Activated T-helper 2 cell treated with anti-CD3 and anti-CD28 coated beads, Interferon-gamma antibody, Interleukin-2, Interleukin-4, amounts not matched to agents 10 μg/mL and 5 μg/mL and 100 μg/mL, durations not matched to agents 14 hours and 24 hours and 36 hours (primary cell): ENCODE measurements at regions of chr12 and their contacts with region 1.

Region 1: DNA sequence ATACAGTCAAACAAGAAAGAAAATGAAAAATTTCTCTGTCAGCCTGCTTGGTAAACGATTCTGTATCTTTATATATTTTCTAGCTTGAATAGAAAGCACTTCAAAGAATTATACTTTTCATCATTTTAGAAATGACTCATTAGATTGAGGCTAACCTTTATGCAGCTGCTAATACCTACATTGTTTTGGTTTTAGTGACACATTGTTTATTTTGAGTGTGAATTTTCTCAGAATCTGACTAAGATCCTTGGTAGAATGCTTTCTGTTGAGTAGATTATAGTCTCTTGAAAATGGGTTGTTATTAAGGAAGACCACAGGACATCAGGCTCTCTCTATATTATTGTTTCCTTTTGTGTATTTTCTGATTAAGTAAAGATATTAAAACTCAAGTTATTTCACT is at the start of gene PMCH:
- DNase-seq: no peak
- H3K4me3 Mint-ChIP-seq: peak within 1 kb of the TSS; percentile 63
- H3K27ac Mint-ChIP-seq: peak within 1 kb of the TSS; percentile 73
- H3K4me1 Mint-ChIP-seq: peaks cover 38% of the 10 kb centered on the region
- H3K27me3 Mint-ChIP-seq: no peaks in the 10 kb centered on the region
- total RNA-seq, gene PMCH: 210 and 221 TPM in 2 replicates

Region 2: DNA sequence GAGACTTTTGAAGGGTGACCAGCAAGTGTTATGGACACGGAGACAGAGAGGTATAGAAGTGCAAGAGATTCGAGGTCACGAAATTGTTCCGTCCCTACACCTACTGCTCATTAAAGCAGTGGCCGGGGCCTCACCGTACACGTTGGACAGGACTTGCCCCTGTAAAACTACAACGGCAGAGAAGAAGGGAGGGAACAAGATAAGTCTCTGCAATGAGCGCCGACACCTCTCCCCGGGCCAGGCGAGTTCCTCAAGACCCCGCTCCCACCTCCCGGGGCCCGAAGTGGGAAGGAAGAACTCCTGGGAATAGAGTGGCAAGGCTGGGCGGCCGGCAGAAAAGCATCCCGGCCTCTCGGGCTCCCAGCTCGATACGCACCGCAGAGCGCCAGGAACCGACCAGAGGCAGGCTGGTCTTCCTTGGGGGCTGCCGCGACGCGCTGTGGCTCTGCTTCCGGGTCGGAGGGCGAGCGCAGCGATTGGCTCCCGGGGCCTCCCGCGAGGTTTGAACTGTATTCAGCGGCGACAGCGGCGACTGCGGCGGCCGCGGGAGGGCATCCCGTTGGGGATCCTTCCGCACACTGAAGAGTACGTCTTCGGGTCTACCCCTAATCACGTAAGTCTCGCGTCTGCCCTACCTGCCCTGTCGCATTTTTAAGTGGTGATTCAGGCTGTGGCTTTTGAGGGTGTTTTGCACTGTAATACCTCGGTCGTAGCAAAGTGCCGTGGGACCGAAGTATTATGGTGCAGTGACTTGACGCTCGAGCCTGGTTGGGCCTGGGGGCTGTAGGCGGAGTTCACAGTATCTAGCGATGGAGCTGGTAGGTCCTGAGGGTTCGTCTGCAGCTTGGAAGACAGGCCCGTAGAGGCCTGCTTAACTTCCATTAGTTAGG is 77.9 kb before region 1 on chr12 and contains the starts of genes NUP37 and PARPBP:
- intact Hi-C with region 1: loop called (anchors 1 kb)
- DNase-seq: peak; percentile 91
- H3K4me3 Mint-ChIP-seq: peak within 1 kb of the TSS; percentile 89
- H3K27ac Mint-ChIP-seq: peak within 1 kb of the TSS; percentile 77
- H3K4me1 Mint-ChIP-seq: peaks cover 36% of the 10 kb centered on the region
- H3K27me3 Mint-ChIP-seq: no peaks in the 10 kb centered on the region
- total RNA-seq, gene NUP37: 93.1 and 93.9 TPM in 2 replicates
- total RNA-seq, gene PARPBP: 27.0 and 27.4 TPM in 2 replicates

Region 3: GRCh38 chr12:102182635-102183034 is 15.2 kb before region 1 on chr12:
- intact Hi-C with region 1: loop called (anchors 1 kb)
- DNase-seq: no peak
- H3K4me3 Mint-ChIP-seq: no peak overlapping the region
- H3K27ac Mint-ChIP-seq: peak overlapping the region; percentile 73
- H3K4me1 Mint-ChIP-seq: peaks cover 11% of the 10 kb centered on the region
- H3K27me3 Mint-ChIP-seq: no peaks in the 10 kb centered on the region

Region 4: GRCh38 chr12:102421801-102422583 is 224.2 kb after region 1 on chr12:
- intact Hi-C with region 1: loop called (anchors 5 kb)
- DNase-seq: no peak
- H3K4me3 Mint-ChIP-seq: no peak overlapping the region
- H3K27ac Mint-ChIP-seq: peak overlapping the region; percentile 60
- H3K4me1 Mint-ChIP-seq: peaks cover 11% of the 10 kb centered on the region
- H3K27me3 Mint-ChIP-seq: peaks cover 10% of the 10 kb centered on the region